ENCODE measurements at regions of chr13 and their contacts with region 1.

Region 1: GRCh38 chr13:73058736-73059459 is at the start of gene KLF5:
- DNase-seq: peak; percentile 97
- H3K4me3 Mint-ChIP-seq: peak within 1 kb of the TSS; percentile 82
- H3K27ac Mint-ChIP-seq: peak within 1 kb of the TSS; percentile 74
- H3K4me1 Mint-ChIP-seq: peaks cover 20% of the 10 kb centered on the region
- H3K27me3 Mint-ChIP-seq: peaks cover 51% of the 10 kb centered on the region
- total RNA-seq, gene KLF5: 2.4 and 2.5 TPM in 2 replicates

Region 2: DNA sequence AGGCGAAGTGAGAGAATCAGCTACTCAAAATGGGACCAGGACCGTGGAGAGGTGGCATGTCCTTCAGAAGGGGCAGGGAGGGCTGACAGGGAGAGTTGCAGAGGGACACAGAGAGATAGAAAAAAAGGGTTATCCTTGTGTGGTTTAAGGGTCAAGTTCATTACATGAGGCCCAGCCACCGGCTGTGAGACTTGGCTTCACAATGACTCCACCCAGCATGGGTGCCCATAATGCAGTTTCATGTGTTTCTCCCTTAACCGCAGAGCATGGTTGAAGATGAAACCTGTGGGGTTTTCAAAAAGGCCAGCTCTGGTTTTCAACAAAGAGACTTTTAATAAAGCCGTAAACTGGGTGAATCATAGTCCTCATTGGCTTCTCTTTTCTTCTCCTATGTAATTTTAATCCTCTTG is 164.5 kb after region 1 on chr13:
- intact Hi-C with region 1: loop called (anchors 2 kb)
- DNase-seq: peak; percentile 2
- H3K4me3 Mint-ChIP-seq: no peak overlapping the region
- H3K27ac Mint-ChIP-seq: no peak overlapping the region
- H3K4me1 Mint-ChIP-seq: peaks cover 16% of the 10 kb centered on the region
- H3K27me3 Mint-ChIP-seq: peaks cover 8% of the 10 kb centered on the region